Activated CD4-positive, alpha-beta memory T cell treated with anti-CD3 and anti-CD28 coated beads, Interleukin-2, amount 10 ng/mL, durations not matched to agents 7 days and 5 days (primary cell): ENCODE measurements at regions of chr2 and their contacts with region 1.

Region 1: DNA sequence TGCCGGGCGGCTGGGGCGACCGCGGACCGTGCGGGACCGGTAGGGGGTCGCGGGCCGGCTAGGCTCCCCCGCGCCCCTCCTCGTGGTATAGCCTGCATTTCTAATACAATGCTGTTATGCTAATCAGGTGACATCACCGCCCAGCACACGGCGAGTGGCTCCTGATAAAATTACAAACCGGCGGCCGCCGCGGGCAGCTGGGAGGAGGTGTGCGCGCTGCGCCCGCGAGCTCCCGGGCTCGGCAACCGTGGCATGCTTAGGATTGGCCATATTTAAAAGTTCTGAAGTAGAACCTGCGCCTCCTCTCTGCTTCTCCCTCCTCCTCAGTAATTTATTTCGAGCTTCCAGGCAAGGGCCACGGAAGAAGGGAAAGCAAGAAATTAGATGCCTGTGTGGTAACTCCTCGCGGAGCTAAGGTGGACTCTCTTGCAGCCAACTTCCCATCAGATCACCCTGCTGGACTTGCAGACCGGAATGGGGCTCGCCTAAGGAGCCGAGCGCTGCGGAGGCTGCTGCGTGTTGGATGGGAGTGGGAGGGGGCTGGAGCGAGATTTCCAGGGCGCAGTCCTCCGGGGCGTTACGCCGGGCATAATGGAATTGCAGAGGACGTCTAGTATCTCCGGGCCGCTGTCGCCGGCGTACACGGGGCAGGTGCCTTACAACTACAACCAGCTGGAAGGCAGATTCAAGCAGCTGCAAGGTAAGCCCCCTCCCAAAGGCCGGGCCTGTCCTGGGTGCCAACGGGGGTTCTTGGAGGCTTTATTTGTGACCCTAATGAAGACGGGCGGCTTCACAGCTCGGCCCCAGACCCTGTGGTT is 102.3 kb downstream of the SPTBN1 start:
- DNase-seq: peak; percentile 82
- H3K4me3 Mint-ChIP-seq: peak overlapping the region; percentile 91
- H3K27ac Mint-ChIP-seq: peak overlapping the region; percentile 89
- H3K4me1 Mint-ChIP-seq: peaks cover 35% of the 10 kb centered on the region
- H3K27me3 Mint-ChIP-seq: peaks cover 5% of the 10 kb centered on the region

Region 2: GRCh38 chr2:54522624-54523281 is 35.6 kb before region 1 on chr2:
- CTCF ChIA-PET with region 1: interaction called, 10 read pairs
- POLR2A ChIA-PET with region 1: interaction called, 29 read pairs
- DNase-seq: peak; percentile 64
- H3K4me3 Mint-ChIP-seq: no peak overlapping the region
- H3K27ac Mint-ChIP-seq: peak overlapping the region; percentile 33
- H3K4me1 Mint-ChIP-seq: peaks cover 17% of the 10 kb centered on the region
- H3K27me3 Mint-ChIP-seq: peaks cover 17% of the 10 kb centered on the region

Region 3: DNA sequence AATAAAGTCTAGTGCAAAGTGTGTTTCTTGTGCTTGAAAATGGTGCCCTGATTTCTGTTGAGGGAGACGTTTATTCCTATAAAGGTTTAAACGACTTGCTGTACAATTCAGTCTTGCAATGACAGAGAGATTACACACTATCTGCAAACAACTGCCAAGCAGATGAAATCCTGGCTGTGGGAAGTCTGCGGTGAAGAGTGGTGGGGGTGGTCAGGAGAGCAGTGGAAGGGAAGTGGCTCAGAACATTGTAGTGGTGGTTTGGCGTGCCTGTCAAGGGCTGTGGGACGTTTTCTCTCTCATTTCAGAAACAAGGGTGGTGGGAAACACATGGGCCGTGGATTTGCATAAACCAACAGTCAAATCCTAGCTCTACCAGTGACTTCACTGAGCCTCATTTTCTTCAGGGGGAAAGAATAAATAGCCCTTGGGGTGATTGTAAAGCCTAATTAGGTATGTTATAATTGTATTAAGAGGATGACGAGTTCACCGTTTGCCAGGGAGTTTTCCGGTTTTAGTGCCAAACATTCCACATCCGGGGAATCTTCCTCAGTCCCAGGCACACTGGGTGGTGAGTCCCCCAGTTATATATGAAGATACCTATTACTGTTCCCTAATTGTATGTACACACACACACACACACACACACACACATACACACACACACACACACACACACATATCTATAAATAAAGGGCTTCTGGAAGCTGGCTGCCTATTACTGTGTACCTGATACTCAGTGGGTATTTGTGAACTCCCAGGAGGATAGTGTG is 12.7 kb after region 1 on chr2:
- CTCF ChIA-PET with region 1: interaction called, 76 read pairs
- POLR2A ChIA-PET with region 1: interaction called, 570 read pairs
- DNase-seq: peak; percentile 82
- H3K4me3 Mint-ChIP-seq: peak overlapping the region; percentile 49
- H3K27ac Mint-ChIP-seq: peak overlapping the region; percentile 95
- H3K4me1 Mint-ChIP-seq: peaks cover 84% of the 10 kb centered on the region
- H3K27me3 Mint-ChIP-seq: no peaks in the 10 kb centered on the region

Region 4: DNA sequence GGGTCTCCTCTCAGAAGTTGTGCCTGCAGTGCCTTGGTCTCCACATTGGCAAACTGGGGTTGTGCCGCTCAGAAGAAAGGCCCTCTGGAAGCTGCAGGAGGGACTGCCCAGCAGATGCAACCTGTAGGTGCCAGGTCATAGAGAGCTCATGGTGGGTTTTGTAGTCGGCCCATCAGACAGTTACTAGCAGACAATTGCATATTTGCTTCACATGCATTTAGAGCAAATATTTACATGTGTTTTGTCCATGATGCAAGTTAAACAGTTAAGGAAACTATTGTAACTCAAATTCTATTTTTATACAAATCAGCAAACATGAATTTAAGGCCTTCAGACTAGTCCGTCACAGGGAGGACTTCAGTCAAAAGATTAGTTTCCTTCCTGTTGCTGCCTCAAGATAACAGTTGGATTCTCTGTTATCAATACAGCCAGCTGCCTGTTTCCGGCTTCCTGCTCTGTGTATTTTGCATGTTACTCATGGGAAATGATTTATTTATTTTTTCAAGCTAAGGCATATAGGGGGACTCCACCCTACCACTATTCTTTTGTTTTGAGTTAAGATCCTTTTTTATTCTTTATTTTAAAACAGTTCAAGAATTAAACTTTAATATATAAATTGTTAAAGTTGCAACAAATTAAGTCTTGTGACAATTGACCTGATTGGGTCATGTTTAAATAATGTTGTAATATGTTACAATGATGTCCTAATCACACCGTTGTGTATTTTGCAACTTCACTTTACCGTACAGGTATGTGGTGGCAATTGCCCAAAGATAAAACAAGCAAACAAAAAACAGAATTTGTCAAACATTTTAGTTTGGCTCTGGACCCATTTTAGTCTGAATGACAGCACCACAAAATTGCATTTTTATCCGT is 31.2 kb after region 1 on chr2:
- CTCF ChIA-PET with region 1: interaction called, 7 read pairs
- POLR2A ChIA-PET with region 1: interaction called, 132 read pairs
- DNase-seq: peak; percentile 51
- H3K4me3 Mint-ChIP-seq: peak overlapping the region; percentile 36
- H3K27ac Mint-ChIP-seq: peak overlapping the region; percentile 91
- H3K4me1 Mint-ChIP-seq: peaks cover 69% of the 10 kb centered on the region
- H3K27me3 Mint-ChIP-seq: no peaks in the 10 kb centered on the region

Region 5: DNA sequence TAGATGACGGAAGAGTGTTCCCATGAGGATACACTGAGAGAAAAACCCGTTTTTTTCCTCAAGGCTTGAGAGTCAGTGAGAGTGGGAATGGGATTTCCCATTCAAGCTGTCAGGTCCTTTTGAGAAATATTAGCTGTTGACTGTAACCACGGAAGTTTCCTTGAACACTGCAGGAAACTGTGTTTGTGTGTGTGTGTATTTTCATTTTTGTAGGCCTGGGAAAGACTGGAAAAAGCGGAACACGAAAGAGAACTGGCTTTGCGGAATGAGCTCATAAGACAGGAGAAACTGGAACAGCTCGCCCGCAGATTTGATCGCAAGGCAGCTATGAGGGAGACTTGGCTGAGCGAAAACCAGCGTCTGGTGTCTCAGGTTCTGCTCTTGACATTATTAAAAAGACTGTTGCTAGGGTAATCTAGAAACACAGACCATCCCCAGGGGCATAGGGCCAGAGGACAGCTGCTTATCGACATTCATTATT is 66.2 kb after region 1 on chr2:
- CTCF ChIA-PET with region 1: interaction called, 10 read pairs
- POLR2A ChIA-PET with region 1: interaction called, 7 read pairs
- DNase-seq: no peak
- H3K4me3 Mint-ChIP-seq: no peak overlapping the region
- H3K27ac Mint-ChIP-seq: no peak overlapping the region
- H3K4me1 Mint-ChIP-seq: no peaks in the 10 kb centered on the region
- H3K27me3 Mint-ChIP-seq: no peaks in the 10 kb centered on the region

Region 6: DNA sequence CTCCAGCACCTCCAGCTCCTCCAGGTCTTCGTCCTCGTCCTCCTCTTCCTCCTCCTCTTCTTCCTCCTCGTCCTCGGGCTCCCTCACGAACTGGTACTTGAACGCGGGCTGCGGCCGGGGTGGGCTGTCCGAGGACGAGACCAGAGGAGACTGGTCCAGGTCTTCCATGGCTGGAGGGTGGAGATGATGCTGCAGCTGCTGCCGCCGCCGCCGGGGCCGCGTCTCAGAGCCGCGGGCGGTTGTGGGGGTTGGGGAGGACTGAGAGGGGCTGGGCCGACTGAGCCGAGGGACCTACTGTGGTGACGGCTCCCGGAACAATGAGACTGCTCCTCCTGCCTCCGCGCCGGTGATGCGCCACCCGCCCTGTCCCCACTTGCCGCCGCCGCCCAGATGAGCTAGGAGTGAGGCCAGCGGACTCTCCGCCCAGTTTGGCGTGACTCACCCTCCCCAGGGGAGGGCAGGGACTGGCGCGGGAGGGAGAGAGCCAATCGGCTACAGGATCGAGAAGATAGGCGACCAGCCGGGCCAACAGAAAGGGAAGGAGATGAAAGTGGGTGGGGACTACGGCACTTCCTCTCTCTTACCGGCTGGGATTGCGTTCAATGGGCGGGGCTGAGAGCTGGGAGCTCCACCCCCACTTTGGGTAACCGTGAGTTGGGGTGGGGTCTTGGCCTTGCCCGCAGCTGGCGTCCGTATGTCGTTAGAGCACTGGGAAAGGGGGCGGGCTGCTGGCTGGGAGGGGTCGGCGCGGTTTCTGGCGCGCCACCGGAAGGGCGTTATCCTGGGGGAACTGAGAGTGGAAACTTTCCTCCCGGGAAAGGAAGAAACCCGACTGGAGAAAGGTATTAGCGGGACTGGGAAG is 492.0 kb after region 1 on chr2 and contains the start of gene RTN4:
- CTCF ChIA-PET with region 1: interaction called, 4 read pairs
- POLR2A ChIA-PET with region 1: interaction called, 11 read pairs
- DNase-seq: peak; percentile 99
- H3K4me3 Mint-ChIP-seq: peak within 1 kb of the TSS; percentile 100
- H3K27ac Mint-ChIP-seq: peak within 1 kb of the TSS; percentile 99
- H3K4me1 Mint-ChIP-seq: peaks cover 59% of the 10 kb centered on the region
- H3K27me3 Mint-ChIP-seq: no peaks in the 10 kb centered on the region
- total RNA-seq, gene RTN4: 90.1 to 92.4 TPM